Heart right ventricle (tissue), 16 donors: ENCODE measurements at regions of chr21 and their contacts with region 1.

Region 1: DNA sequence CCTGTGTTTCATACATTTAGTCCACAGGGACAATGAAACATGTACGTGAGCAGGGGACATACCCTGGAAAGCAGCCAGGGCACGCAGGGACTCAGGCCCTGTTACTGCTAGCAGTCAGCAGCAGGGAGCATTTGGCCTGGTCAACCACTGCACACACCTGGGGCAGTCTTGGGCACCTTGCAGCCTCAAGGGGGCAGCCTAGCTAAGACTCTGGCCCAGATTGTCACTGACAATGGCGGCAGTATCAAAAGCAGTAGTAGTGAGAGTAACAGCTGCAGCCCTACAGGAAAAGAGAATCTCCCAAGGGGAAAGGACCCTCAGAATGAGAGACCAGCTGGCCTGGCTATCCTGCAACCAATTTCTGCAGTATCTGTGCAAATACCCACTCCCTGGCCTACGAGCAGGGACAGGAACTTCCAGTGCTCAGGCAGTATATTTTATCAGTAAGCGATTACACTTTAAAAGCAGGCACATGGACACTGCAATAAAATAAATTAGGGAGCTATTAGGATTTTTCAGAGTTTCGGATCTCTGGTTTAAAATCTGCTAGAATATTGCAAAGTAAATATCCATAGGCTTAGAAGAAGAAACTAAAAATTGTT is 475.6 kb downstream of the LTN1 start:
- DNase-seq: peak; percentile 65 to 74
- ATAC-seq: peak; percentile 92 to 97 (median 95)
- H3K4me3 ChIP-seq: peak overlapping the region in 1 of 10 donors; percentile 11
- H3K27ac ChIP-seq: peak overlapping the region in 2 of 10 donors; percentile 4 to 53
- H3K4me1 ChIP-seq: peaks cover 0 to 34% (median 16%) of the 10 kb centered on the region in 9 donors
- H3K27me3 ChIP-seq: no peaks in the 10 kb centered on the region
- CTCF ChIP-seq: peak; percentile 53 to 86 (median 71)

Region 2: DNA sequence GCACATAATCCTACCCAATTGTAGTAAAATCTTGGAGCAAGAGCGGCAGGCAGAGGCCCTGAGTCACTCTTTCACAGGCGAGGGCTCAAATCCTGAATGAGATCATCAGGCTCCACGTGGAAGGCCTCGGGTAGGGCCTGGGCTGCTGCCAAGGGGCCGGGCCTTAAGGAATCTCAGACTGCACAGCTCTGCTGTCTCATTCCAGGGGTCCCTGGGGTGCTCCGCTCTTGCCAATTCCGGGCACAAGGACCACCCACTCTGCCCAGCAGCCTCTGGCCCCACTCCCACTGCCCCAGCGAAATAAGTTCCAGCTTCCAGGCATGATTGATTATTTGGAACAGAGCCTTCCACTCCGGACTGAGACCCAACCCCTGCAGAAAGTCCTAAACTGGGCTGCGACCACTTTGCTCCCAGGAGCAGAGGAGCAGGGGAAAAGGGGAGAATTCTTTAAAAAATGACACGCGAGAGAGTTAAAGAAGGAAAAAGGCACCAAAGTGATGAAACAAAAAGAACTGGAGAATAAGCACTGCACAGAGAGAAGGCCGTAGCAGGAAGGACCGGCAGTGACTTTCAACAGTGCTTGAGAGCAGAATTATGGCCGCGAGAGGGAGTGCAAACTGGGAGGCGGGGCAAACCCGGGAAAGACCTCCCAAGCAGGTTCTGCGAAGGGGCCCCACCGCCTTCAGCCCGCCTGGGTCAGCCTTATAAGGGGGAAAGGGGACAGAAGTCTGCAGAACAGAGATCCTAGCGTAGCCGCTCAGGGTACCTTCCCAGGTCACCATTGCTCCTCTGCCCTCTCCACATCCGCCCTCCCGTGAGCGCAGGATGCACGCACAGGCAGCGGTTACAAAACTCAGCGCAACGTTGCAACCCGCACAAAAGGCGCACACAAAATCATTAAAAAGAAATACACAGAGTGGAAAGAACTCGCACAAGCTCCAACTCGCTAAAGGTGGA is 1673.8 kb before region 1 on chr21:
- intact Hi-C with region 1: loop called in 3 of 10 experiments (anchors 5 to 10 kb)
- DNase-seq: peak; percentile 90 to 95
- ATAC-seq: peak; percentile 45 to 69 (median 65)
- H3K4me3 ChIP-seq: peak overlapping the region; percentile 60 to 95 (median 80)
- H3K27ac ChIP-seq: peak overlapping the region; percentile 93 to 99 (median 96)
- H3K4me1 ChIP-seq: peaks cover 3 to 67% (median 57%) of the 10 kb centered on the region in 9 donors
- H3K27me3 ChIP-seq: peaks cover 0 to 56% (median 0%) of the 10 kb centered on the region in 7 donors
- CTCF ChIP-seq: peak in 8 of 9 donors; percentile 26 to 62 (median 41)

Region 3: GRCh38 chr21:28154121-28154520 is 363.0 kb before region 1 on chr21:
- intact Hi-C with region 1: loop called in 1 of 10 experiments (anchors 10 kb)
- DNase-seq: no peak
- ATAC-seq: no peak
- H3K4me3 ChIP-seq: no peak overlapping the region
- H3K27ac ChIP-seq: no peak overlapping the region
- H3K4me1 ChIP-seq: peaks cover 0 to under 1% (median 0%) of the 10 kb centered on the region in 9 donors
- H3K27me3 ChIP-seq: no peaks in the 10 kb centered on the region
- CTCF ChIP-seq: no peak

Region 4: GRCh38 chr21:28325618-28326017 is 191.5 kb before region 1 on chr21:
- intact Hi-C with region 1: no loop called
- DNase-seq: no peak
- ATAC-seq: no peak
- H3K4me3 ChIP-seq: no peak overlapping the region
- H3K27ac ChIP-seq: no peak overlapping the region
- H3K4me1 ChIP-seq: no peaks in the 10 kb centered on the region
- H3K27me3 ChIP-seq: no peaks in the 10 kb centered on the region
- CTCF ChIP-seq: no peak

Region 5: GRCh38 chr21:28342212-28342810 is 174.8 kb before region 1 on chr21:
- intact Hi-C with region 1: loop called in 3 of 10 experiments (anchors 5 to 10 kb)
- DNase-seq: no peak
- ATAC-seq: no peak
- H3K4me3 ChIP-seq: no peak overlapping the region
- H3K27ac ChIP-seq: no peak overlapping the region
- H3K4me1 ChIP-seq: peaks cover 0 to 28% (median 16%) of the 10 kb centered on the region in 9 donors
- H3K27me3 ChIP-seq: no peaks in the 10 kb centered on the region
- CTCF ChIP-seq: no peak

Region 6: DNA sequence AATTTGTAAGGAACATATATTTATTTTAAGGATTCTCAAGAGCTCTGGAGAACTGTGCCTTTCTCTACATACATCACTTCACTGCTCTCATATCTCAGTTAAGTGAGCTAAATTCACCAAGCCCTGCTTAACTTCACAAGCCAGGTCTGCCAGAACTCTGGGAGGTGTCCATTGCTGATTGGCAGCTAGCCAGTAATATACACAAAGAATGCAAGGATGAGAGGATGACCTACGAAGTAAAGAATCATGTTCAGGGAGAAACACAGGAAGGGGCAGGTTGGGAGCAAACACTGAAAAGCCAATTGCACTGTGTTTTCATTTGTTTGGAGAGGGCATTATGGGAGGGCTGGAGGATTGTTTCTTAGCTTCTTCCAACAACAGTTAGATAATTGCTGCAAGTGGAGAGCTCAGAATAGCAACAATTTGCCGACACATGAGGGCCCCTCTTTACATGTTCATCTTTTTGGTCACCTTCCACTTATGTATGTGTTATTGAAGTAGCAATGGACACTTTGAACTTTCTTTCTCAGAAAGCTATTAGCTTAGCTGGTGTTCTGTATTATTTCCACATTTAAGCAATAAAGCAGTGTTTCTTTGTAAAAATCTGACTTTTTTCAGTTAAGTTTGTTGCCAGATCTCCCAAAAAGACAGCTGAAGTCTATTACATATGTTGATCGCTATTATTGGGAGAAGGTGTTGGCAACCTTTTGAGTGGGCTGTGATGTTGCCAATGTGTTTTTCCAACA is 220.8 kb after region 1 on chr21:
- intact Hi-C with region 1: loop called in 3 of 10 experiments (anchors 2 to 5 kb)
- DNase-seq: no peak
- ATAC-seq: peak; percentile 36 to 88 (median 72)
- H3K4me3 ChIP-seq: no peak overlapping the region
- H3K27ac ChIP-seq: peak overlapping the region in 8 of 10 donors; percentile 6 to 76 (median 58)
- H3K4me1 ChIP-seq: peaks cover 0 to 27% (median 19%) of the 10 kb centered on the region in 9 donors
- H3K27me3 ChIP-seq: no peaks in the 10 kb centered on the region
- CTCF ChIP-seq: no peak